ENCODE measurements at regions of chr12 and their contacts with region 1.

Region 1: GRCh38 chr12:77925536-77926108 is 94.9 kb downstream of the NAV3 start:
- DNase-seq: peak; percentile 92
- ATAC-seq: peak; percentile 99
- H3K4me3 ChIP-seq: no peak overlapping the region
- H3K27ac ChIP-seq: no peak overlapping the region
- H3K4me1 ChIP-seq: no peaks in the 10 kb centered on the region
- H3K27me3 ChIP-seq: no peaks in the 10 kb centered on the region; the same call in 1 of the 2 replicates
- CTCF ChIP-seq: peak; percentile 95
- POLR2A ChIP-seq: no peak
- RAD21 ChIP-seq: peak; percentile 81

Region 2: DNA sequence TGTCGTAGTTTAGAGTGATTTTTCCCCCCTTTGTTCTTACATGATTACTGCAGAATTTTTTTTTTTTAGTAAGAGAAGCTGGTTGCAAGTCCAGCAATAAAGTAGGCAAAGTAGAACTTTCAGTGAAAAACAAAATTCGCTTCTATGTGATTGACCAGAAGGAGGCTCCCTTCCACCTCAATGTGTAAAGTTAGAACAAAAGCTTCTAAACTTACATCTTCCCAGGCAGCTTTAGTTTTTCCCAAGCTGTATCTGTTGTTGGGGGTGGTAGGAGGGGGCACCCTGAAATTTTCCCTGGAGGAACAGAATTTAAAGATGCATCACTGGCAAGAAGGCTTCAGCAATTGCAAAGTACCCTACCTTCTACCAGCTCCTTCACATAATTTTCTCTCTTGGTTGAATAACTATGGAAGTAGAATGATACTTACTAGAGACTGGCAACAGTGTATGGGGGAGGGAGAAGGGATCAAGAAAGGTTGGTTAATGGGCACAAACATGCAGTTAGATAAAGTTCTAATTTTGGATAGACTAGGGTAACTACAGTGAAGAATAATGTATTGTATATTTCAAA is 772.9 kb before region 1 on chr12:
- CTCF ChIA-PET with region 1: no interaction called
- POLR2A ChIA-PET with region 1: no interaction called
- dilution Hi-C with region 1: no loop called
- in situ Hi-C with region 1: no loop called
- intact Hi-C with region 1: loop called (anchors 2 kb)
- DNase-seq: peak; percentile 56
- ATAC-seq: peak; percentile 54; the same call in 1 of the 2 replicates
- H3K4me3 ChIP-seq: no peak overlapping the region
- H3K27ac ChIP-seq: no peak overlapping the region
- H3K4me1 ChIP-seq: no peaks in the 10 kb centered on the region
- H3K27me3 ChIP-seq: no peaks in the 10 kb centered on the region
- CTCF ChIP-seq: peak; percentile 65
- POLR2A ChIP-seq: no peak
- RAD21 ChIP-seq: peak; percentile 76

Region 3: GRCh38 chr12:77724367-77724957 is 201.2 kb before region 1 on chr12:
- CTCF ChIA-PET with region 1: interaction called, 12 read pairs
- POLR2A ChIA-PET with region 1: no interaction called
- dilution Hi-C with region 1: no loop called
- in situ Hi-C with region 1: loop called (anchors 5 kb)
- intact Hi-C with region 1: loop called (anchors 1 kb)
- DNase-seq: peak; percentile 45
- ATAC-seq: peak; percentile 62; the same call in 1 of the 2 replicates
- H3K4me3 ChIP-seq: no peak overlapping the region
- H3K27ac ChIP-seq: no peak overlapping the region
- H3K4me1 ChIP-seq: peaks cover 2% of the 10 kb centered on the region; the same call in 1 of the 2 replicates
- H3K27me3 ChIP-seq: no peaks in the 10 kb centered on the region
- CTCF ChIP-seq: peak; percentile 69
- POLR2A ChIP-seq: no peak
- RAD21 ChIP-seq: peak; percentile 69

Region 4: DNA sequence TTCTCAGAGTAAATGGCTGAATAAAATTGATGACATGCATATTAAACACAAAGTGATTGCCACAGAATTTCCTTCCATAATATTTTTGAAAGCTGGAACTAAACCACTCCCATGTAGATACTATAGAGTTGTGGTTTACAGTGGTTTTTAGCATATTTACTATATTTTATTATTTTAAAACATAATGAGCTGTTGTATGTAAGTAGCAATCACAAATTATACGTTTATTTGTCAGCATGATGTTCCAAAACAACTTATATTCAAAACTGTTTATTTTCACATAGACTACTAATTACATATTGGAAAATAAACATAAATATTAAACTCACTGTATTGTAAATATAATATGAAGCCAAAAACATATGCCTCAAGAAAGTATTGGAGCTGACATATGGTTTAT is 17.7 kb before region 1 on chr12:
- CTCF ChIA-PET with region 1: interaction called, 14 read pairs
- POLR2A ChIA-PET with region 1: no interaction called
- dilution Hi-C with region 1: no loop called
- in situ Hi-C with region 1: no loop called
- intact Hi-C with region 1: no loop called
- DNase-seq: no peak
- ATAC-seq: no peak
- H3K4me3 ChIP-seq: no peak overlapping the region
- H3K27ac ChIP-seq: no peak overlapping the region
- H3K4me1 ChIP-seq: no peaks in the 10 kb centered on the region
- H3K27me3 ChIP-seq: no peaks in the 10 kb centered on the region
- CTCF ChIP-seq: no peak
- POLR2A ChIP-seq: no peak
- RAD21 ChIP-seq: no peak

Region 5: GRCh38 chr12:77940011-77940423 is 14.4 kb after region 1 on chr12:
- CTCF ChIA-PET with region 1: interaction called, 7 read pairs
- POLR2A ChIA-PET with region 1: interaction called, 11 read pairs
- dilution Hi-C with region 1: no loop called
- in situ Hi-C with region 1: no loop called
- intact Hi-C with region 1: no loop called
- DNase-seq: peak; percentile 93
- ATAC-seq: peak; percentile 77
- H3K4me3 ChIP-seq: peak overlapping the region; percentile 59; the same call in 1 of the 2 replicates
- H3K27ac ChIP-seq: peak overlapping the region; percentile 99
- H3K4me1 ChIP-seq: peaks cover 1% of the 10 kb centered on the region; the same call in 1 of the 2 replicates
- H3K27me3 ChIP-seq: no peaks in the 10 kb centered on the region
- CTCF ChIP-seq: no peak
- POLR2A ChIP-seq: peak; percentile 51; the same call in 1 of the 2 replicates
- RAD21 ChIP-seq: no peak

Measured in IMR-90 (cell line).